ENCODE measurements at regions of chr1 and their contacts with region 1.

Region 1: GRCh38 chr1:169928438-169929209 is 34.9 kb upstream of the SCYL3 start:
- DNase-seq: no peak
- ATAC-seq: no peak

Region 2: DNA sequence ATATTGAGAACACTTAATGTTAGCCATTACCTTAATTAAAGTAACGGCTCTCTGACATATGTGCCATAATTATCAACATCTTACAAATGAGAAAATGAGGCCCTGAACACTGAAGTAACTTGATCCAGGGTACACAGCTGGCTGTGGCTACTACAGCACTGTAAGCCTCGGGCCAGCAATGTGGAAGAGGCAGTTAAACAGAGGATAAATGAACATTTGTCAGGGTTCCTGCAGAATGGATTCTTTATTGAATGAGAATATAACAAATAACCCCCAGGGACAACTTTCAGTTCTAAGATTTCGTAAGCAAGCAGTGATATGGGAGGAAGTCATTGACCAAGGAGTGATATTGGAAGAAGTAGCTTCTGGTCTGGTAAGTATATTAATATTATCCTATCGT is 35.6 kb after region 1 on chr1:
- intact Hi-C with region 1: no loop called
- DNase-seq: no peak
- ATAC-seq: no peak

Region 3: DNA sequence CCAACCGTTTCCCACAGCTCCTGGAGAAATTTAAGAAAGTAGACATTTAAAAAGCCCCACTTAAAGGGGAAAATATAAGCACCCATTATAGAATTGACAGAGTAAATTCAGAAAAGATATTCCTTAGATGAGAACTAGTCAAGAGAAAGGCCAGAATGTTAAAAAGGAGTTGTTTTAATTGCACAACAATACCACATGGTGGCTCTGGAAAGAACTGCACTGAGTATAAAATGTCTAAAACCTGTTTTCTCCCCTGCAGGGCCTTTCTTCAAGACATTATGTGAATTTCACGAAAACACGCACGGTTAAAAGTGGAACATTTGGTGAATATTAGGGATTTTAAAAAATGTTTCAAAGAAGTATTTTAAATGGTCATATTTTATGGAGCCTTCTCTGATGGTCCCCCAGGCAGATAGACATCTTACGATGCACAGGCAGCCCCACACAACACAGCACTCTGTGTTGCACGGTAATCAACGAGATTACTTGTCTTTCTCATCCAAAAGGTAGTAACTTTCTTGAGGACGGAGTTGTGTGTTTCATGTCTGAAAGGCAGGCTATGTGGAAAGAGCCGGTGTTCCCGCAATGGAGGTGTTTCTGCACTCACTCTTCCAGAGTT is 837.2 kb after region 1 on chr1:
- intact Hi-C with region 1: loop called (anchors 5 kb)
- DNase-seq: no peak
- ATAC-seq: peak; percentile 54

Region 4: GRCh38 chr1:170929835-170930554 is 1001.4 kb after region 1 on chr1:
- intact Hi-C with region 1: loop called (anchors 5 kb)
- DNase-seq: no peak
- ATAC-seq: peak; percentile 88

Measured in Right ventricle myocardium inferior (tissue), 1 donor.